ENCODE measurements at regions of chr5 and their contacts with region 1.

Region 1: DNA sequence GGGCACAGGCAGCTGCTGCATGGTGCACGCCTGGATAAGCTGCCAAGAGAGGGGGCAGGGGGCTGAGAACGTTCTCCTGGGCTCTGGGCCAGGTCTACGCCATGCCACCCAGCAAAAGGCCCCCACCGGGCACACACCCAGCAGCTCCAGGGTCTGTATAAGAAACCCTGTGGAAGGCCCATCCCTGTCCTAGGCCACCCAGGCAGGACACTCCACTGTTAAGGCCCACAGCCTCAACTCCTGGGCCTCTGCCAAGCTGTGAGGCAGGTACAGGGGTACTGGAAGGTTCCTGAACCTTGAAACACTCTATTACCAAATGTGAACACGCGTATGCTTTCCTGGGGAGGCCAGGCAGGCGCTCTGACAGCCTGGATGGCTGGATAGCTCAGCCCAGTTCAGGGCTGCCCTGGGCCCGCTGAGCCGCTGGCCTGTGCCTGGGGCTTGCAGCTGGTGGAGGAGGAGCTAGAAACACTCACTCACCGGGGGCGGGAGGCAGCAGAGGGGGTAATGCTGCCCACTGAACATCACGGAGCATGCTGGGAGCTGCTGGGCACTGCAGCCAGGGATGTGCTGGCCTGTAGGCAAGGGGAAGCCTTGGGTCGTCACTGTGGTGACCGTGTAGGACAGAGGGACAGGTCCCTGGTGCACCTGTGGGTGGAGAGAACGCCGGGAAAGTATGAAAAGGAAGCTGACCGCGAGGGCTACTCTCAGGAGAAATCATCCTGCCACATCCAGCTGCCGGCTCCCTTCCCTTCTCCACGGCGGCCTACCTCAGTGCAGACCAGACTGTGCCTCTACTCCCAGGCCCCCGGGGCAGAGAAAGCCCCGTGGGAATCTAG is 6.0 kb downstream of the RNF44 start:
- DNase-seq: peak; percentile 35
- H3K4me3 Mint-ChIP-seq: peak overlapping the region; percentile 62
- H3K27ac Mint-ChIP-seq: peak overlapping the region; percentile 79
- H3K4me1 Mint-ChIP-seq: peaks cover 57% of the 10 kb centered on the region
- H3K27me3 Mint-ChIP-seq: no peaks in the 10 kb centered on the region

Region 2: DNA sequence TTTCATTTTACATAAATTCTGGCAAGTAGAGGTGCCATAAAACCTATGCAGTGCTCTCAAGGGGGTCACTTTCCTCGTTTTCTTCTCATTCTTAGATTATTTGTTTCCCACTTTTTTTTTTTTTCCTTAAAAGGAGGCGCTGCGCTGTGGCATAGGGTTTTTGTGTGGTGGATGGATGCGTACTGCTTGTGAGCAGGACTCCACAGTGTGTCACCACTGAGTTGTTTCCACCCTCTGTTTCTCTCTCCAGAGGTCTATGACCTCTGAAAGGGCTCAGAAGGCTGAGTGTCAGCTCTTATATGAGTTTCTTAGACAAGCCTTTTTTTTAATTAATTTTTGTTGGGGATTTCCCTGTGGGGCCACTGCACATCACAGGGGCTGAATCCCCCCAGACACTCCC is 101.2 kb before region 1 on chr5:
- CTCF ChIA-PET with region 1: interaction called, 10 read pairs
- intact Hi-C with region 1: no loop called
- DNase-seq: no peak
- H3K4me3 Mint-ChIP-seq: no peak overlapping the region
- H3K27ac Mint-ChIP-seq: no peak overlapping the region
- H3K4me1 Mint-ChIP-seq: no peaks in the 10 kb centered on the region
- H3K27me3 Mint-ChIP-seq: peaks cover 4% of the 10 kb centered on the region

Region 3: DNA sequence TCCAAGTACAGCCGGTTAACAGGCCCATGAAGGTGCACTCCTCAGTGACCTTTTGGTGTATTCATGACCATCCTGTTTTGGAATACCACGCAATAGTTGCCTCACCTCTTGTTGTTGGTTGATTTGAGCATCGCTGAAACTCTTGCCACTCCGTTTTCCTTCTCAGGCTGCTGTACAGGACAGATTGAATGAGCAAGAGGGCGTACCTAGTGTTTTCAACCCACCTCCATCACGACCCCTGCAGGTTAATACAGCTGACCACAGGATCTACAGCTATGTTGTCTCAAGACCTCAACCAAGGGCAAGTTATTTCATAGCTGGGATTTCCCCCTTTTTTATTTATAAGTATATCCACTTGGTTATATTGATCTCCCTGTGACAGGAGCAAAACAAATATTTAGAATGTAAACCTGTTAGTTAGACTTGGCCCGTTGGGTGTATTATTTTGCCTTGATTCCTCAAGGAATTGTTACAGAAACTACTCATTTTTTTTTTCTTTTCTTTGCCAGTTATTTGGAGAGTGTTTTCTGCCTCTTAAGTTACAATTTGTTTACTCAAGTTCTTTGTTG is 44.9 kb before region 1 on chr5:
- CTCF ChIA-PET with region 1: no interaction called
- intact Hi-C with region 1: loop called (anchors 5 kb)
- DNase-seq: no peak
- H3K4me3 Mint-ChIP-seq: no peak overlapping the region
- H3K27ac Mint-ChIP-seq: no peak overlapping the region
- H3K4me1 Mint-ChIP-seq: peaks cover 40% of the 10 kb centered on the region
- H3K27me3 Mint-ChIP-seq: no peaks in the 10 kb centered on the region